ENCODE measurements at regions of chr4 and their contacts with region 1.

Region 1: DNA sequence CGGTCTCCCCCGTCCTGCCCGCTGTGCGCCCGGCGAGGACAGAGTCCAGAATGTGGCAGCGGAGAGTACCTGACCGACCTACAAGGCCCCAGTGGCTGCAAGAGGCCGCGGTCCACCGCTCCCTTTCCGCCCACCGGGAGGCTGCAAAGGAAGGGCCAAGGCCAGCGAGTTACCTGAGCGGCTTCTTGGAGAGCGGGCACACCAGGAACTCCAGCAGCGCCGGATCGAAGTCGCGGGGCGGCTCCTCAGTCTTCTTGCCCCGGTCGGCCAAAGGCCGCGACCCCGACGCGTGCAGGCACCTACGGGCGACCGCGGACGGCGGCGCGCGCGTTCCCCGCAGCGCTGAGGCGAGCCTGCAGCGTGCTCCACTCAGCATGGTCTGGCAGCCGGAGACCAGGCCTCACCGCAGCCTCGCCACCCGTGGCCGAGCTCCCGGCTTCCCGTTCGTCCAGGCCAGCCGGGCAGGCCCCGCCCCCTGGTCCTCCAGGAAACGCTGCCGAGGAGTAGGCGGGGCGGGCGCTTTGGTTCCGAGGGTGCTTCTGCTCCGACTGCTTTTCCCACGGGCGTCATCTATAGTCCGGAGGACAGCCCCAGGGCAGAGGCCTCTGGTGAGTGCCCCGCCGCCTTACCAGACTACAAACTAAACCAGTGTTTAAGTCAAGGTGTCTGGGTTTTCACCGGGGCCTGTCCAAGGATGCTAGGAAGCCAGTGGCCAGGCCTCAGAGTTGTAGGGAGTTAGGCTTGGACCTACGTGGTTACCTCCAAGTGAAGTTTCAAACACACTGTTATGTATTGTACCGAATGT is at the start of gene PYURF:
- DNase-seq: peak; percentile 91 to 99 (median 95)

Region 2: DNA sequence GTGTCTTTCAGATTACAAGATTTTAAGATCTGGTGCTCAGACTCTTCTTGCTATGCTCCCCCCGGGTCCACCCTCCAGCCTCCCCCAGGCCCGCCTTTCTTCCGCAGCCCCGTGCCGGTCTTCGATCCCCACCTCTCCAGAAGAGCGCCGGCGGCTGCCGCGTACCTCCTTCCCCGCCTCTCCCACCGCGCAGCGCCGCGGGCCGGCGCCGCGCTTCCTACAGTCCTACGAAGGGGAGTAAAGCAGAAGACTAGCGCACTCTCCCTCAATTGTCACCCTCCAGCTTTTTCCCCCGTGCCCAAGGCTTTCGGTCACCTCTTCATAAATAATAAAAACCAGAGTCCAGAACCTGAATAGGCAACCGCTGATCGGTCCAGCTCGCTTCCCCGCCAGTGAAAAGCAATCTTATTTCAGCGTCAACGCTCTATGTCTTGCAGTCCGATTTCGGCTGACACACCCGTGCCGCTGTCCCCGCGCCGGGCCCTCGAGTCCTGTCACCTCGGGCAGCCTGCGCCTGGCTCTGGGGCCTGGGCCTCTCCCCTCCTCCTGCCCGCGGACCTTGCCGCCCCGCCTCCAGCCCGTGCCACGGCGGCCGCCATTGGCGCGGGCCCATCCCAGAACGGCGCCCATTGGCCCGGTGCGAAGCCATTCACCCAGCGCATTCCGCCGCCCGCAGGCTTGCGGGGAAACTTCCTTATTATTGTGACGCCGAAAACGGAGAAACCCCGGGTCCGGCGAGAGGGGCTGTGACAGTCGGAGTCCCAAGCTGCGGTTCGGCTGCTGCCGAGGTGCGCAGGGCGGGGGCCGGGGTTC is 68.5 kb after region 1 on chr4 and contains the start of gene HERC3:
- intact Hi-C with region 1: loop called (anchors 2 kb)
- DNase-seq: peak; percentile 88 to 99 (median 93)

Region 3: GRCh38 chr4:88659055-88659889 is 135.7 kb after region 1 on chr4:
- intact Hi-C with region 1: loop called (anchors 5 kb)
- DNase-seq: peak in 3 of 10 donors; percentile 11 to 70 (median 27)

Region 4: GRCh38 chr4:88823058-88823919 is 299.8 kb after region 1 on chr4:
- intact Hi-C with region 1: loop called (anchors 10 kb)
- DNase-seq: peak; percentile 65 to 96 (median 75)

Region 5: GRCh38 chr4:89024051-89024675 is 500.6 kb after region 1 on chr4:
- intact Hi-C with region 1: loop called (anchors 5 kb)
- DNase-seq: peak in 2 of 10 donors; percentile 9 to 46

Measured in posterior cingulate gyrus (tissue), 11 donors.